Mammary epithelial cell (primary cell): ENCODE measurements at regions of chr2 and their contacts with region 1.

Region 1: DNA sequence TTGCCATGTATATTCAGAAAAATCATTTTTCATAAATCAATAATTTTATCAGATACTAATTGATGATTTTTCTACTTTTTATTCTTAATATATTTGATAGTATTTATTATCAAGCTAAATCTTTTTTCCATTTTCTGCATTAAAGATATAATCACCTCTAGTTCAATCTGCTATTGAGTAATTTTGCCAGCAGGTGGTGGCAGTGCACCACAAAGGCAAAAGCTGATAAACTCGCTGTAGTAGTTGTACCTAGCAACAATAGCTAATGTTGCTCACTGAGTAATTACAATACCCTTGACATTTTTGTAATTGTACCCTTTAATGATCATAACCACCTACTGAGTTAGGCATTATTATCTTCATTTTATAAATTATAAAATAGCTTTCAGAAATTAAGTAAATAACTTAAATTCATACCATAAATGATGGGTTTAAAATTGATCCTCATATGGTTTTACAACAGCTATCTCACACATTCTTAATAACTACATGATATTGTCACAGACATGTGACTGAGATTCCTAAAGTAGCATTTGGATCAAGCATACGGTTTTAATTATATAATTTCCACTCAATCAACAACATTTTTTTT is 52.0 kb upstream of the CALCRL start:
- DNase-seq: peak; percentile 28
- H3K4me3 ChIP-seq: no peak overlapping the region
- H3K27ac ChIP-seq: no peak overlapping the region
- H3K4me1 ChIP-seq: no peaks in the 10 kb centered on the region
- H3K27me3 ChIP-seq: no peaks in the 10 kb centered on the region
- CTCF ChIP-seq: peak; percentile 74 to 82

Region 2: DNA sequence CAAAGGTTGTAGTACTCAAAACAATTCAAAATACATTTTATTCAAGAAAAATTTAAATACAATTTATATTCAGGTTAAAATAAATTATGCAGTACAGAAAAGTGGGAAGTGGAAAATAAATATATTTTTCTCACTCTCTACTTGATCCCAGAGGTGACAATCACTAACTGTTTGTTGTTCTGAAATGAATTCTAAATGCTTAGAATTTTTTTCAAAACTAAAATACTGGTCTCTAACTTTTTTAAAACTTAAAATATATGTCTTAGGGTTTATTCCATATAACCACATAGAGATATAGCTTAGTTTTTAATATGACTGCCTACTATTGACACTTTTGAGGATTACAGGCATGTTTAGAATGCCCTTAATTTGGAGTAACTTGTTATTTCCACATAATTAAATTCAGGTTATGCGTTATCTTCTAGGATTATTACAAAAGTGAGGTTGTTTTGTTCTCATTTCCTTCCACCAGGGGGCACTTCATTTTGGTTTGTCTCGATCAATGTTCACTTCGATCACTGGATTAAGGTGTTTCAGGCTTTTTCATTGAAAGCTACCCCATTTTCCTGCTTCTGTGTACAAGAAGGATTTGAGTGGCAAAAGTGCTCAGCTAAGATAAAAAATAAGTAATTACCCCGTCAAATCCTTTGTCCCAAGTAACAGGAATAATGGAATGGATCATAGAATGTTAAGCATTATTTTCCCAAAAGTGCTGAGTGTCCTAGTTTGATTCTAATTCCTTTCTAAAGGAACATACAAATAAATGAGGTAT is 81.3 kb after region 1 on chr2:
- CTCF ChIA-PET with region 1: interaction called, 5 read pairs
- dilution Hi-C with region 1: no loop called
- in situ Hi-C with region 1: loop called (anchors 5 kb)
- intact Hi-C with region 1: loop called (anchors 1 kb)
- DNase-seq: peak; percentile 27
- H3K4me3 ChIP-seq: peak overlapping the region in 1 of 3 experiments; percentile 40
- H3K27ac ChIP-seq: no peak overlapping the region
- H3K4me1 ChIP-seq: peaks cover 4% of the 10 kb centered on the region
- H3K27me3 ChIP-seq: peaks cover 2% of the 10 kb centered on the region
- CTCF ChIP-seq: peak; percentile 55 to 62

Region 3: DNA sequence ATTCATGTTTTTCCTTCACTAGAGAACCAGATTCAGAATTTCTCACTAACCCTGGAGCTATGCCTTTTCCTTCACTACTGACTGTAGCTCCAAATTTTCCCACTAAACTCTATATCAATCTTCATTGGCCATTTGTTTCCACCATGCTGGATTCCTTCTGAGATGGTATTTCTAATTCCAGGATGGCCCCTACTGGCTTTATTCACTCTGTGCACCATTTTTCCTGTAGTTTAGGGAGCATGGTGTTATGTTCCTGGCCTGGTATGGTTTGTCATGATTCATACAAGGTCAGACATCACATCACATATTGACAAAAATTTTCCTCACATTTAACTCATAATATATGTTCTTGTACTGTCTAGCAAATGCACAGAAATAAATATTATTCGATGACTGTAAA is 283.4 kb after region 1 on chr2:
- CTCF ChIA-PET with region 1: no interaction called
- dilution Hi-C with region 1: no loop called
- in situ Hi-C with region 1: no loop called
- intact Hi-C with region 1: loop called (anchors 1 kb)
- DNase-seq: peak; percentile 19
- H3K4me3 ChIP-seq: no peak overlapping the region
- H3K27ac ChIP-seq: no peak overlapping the region
- H3K4me1 ChIP-seq: no peaks in the 10 kb centered on the region
- H3K27me3 ChIP-seq: no peaks in the 10 kb centered on the region
- CTCF ChIP-seq: peak in 1 of 2 donors; percentile 52

Region 4: DNA sequence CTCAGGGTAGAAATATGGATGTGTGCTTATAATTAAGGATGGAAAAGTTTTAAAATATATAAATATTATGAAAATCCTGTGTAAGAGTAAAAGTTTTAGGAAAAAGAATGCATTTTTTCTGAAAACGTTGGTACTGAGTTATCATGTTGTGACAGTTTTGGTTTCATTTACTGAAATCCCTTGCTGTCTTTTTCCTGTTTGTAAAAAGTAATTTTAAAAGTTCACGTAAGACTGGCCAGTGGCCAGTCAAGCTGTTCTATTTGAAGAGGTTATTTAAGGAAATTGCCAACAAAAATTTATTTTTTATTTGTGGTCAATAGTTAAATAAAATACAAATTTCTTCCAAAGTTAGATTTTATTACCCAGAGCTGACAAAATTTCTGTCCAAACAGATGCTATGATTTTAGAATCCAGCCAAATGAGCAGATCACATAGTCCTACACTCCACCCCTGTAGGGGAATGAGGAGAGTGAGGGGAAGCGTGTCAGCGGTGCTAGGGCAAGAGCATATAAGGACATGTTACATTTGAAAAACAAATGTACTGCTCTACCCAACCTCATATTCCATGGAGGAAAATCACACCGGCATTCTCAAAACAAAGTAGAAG is 352.0 kb after region 1 on chr2:
- CTCF ChIA-PET with region 1: no interaction called
- dilution Hi-C with region 1: no loop called
- in situ Hi-C with region 1: loop called (anchors 10 to 25 kb)
- intact Hi-C with region 1: no loop called
- DNase-seq: no peak
- H3K4me3 ChIP-seq: no peak overlapping the region
- H3K27ac ChIP-seq: no peak overlapping the region
- H3K4me1 ChIP-seq: no peaks in the 10 kb centered on the region
- H3K27me3 ChIP-seq: no peaks in the 10 kb centered on the region
- CTCF ChIP-seq: no peak